Activated CD4-positive, alpha-beta memory T cell treated with anti-CD3 and anti-CD28 coated beads for 36 hours (primary cell): ENCODE measurements at regions of chr5 and their contacts with region 1.

Region 1: DNA sequence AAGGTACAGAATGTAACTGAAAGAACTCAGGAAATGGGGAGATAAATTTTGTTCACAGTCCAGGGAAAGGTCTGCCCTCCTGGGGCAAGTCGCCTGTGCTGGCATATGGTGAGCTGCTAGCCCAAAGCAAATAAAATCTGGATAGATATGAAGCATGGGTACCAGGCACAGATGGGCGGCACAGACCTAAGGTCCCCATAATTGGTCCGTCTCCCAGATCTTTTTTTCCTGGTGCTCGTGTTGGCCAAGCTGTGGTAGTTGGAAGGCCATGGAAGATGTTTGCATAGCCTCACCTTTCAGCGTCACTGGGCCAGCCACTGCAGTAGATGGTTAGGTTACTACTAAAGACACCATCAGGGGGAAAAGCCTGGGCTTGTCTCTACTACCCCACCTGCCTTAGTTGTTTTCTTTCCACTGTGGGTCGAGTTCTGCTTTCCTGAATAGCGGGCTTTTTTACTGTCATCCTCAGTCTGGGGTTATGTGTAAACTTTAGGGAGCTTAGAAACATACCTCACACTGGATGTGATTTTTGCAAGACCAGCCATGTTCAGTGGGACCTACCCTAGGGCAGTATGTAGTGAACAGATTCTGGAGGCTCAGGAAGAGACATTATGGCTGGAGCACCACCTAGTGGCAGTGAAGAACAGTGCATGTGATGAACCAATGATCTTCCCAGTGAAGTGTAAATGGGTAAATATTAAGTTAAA is 24.2 kb upstream of the GLRX start:
- DNase-seq: peak; percentile 76
- H3K4me3 Mint-ChIP-seq: no peak overlapping the region
- H3K27ac Mint-ChIP-seq: peak overlapping the region; percentile 62
- H3K4me1 Mint-ChIP-seq: peaks cover 15% of the 10 kb centered on the region
- H3K27me3 Mint-ChIP-seq: no peaks in the 10 kb centered on the region

Region 2: GRCh38 chr5:95283761-95284415 is 562.8 kb before region 1 on chr5:
- CTCF ChIA-PET with region 1: no interaction called
- POLR2A ChIA-PET with region 1: no interaction called
- intact Hi-C with region 1: loop called (anchors 10 kb)
- DNase-seq: peak; percentile 24
- H3K4me3 Mint-ChIP-seq: no peak overlapping the region
- H3K27ac Mint-ChIP-seq: no peak overlapping the region
- H3K4me1 Mint-ChIP-seq: peaks cover 9% of the 10 kb centered on the region
- H3K27me3 Mint-ChIP-seq: peaks cover 36% of the 10 kb centered on the region

Region 3: DNA sequence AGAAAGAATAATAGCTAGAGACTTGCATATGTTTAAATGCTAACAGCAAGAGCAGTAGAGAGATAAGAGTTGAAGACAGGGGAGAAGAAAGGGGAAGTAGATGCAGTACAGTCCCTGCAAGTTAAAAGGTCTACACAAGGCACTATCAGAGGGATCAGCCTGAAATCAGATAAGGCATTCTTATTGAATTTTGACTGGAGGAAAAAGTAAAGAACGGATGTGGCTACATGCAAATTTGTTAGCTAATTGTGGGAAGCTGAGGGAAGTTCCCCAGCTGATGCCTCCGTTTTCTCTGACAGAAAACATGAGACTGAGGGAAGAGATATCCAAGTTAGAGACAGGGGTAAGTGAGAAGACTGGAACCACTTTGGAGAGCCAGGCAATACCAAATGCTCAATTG is 128.5 kb before region 1 on chr5:
- CTCF ChIA-PET with region 1: no interaction called
- POLR2A ChIA-PET with region 1: no interaction called
- intact Hi-C with region 1: loop called (anchors 2 kb)
- DNase-seq: peak; percentile 35
- H3K4me3 Mint-ChIP-seq: no peak overlapping the region
- H3K27ac Mint-ChIP-seq: no peak overlapping the region
- H3K4me1 Mint-ChIP-seq: peaks cover 16% of the 10 kb centered on the region
- H3K27me3 Mint-ChIP-seq: peaks cover 7% of the 10 kb centered on the region

Region 4: DNA sequence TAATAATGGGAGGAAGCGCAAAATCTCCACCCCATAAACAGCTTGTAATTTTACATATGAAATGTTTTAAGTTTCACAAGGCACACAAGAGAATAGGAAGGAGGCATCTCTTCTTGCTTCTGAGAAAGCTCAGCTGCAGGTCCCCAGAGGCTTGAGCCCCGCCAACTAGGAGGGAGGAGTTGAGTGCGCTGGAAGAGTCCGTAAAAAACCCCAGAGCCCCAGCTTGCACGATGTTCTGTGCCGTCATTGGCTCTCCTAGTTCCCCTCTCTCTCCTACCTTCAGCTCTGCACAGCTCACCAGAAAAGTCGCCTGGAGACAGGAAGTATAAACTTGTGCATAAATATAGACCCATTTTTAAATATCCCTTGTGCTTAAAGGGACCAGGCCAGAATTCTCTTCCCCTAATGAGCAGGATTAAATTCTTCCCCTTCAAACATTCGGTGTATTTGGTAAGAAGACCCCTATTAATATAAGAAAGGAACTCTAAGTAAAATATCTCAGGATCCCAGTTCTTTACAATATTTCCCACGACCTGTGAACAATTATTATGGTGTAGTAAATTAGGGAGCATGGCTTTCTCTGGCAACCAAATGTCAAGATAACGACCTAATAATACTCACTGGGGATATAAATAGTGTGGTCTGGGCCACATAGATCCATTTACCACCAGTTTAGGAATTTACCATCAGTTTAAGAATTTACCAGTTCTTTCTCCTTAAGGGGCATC is 37.9 kb before region 1 on chr5:
- CTCF ChIA-PET with region 1: interaction called, 5 read pairs
- POLR2A ChIA-PET with region 1: interaction called, 4 read pairs
- intact Hi-C with region 1: loop called (anchors 1 kb)
- DNase-seq: peak; percentile 86
- H3K4me3 Mint-ChIP-seq: peak overlapping the region; percentile 6
- H3K27ac Mint-ChIP-seq: peak overlapping the region; percentile 65
- H3K4me1 Mint-ChIP-seq: peaks cover 54% of the 10 kb centered on the region
- H3K27me3 Mint-ChIP-seq: no peaks in the 10 kb centered on the region

Region 5: DNA sequence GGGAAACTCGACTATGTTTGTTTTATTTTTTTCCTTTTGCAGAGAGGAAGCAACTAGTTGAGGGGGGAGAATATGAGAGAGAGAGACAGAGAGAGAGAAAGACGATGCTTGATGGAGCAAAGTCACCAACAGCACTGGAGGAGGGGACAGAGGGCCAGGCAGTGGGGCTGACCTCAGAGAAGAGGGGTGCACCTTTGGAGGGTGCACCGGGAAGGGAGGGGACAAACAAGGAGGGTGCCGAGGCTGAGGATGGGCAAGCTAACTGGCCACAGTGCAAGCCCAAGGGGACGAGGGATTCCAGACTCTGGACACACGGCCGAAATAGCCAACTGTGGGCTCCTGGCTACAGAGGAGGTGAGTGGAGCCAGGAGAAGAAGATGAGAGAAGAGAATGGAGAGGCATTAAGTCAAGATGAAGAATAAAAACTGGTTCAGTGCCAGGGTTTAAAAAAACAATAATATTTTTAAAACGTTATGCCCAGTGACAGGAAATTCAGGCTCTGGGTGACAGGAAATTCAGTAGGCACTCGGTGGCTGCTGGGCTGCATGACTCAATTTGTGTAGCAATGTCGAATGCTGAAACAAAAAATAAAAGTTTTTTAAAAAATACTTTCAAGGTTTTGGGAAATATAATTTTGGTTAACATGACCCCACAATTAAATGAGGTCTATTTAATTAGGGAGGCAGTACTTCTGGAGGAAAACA is 10.9 kb before region 1 on chr5:
- CTCF ChIA-PET with region 1: interaction called, 7 read pairs
- POLR2A ChIA-PET with region 1: interaction called, 5 read pairs
- intact Hi-C with region 1: loop called (anchors 1 kb)
- DNase-seq: no peak
- H3K4me3 Mint-ChIP-seq: peak overlapping the region; percentile 75
- H3K27ac Mint-ChIP-seq: peak overlapping the region; percentile 91
- H3K4me1 Mint-ChIP-seq: peaks cover 50% of the 10 kb centered on the region
- H3K27me3 Mint-ChIP-seq: no peaks in the 10 kb centered on the region